ENCODE measurements at regions of chr1 and their contacts with region 1.

Region 1: GRCh38 chr1:94335950-94336349 is 82.2 kb upstream of the ABCD3 start:
- DNase-seq: no peak
- ATAC-seq: peak; percentile 86 to 93
- H3K4me3 ChIP-seq: no peak overlapping the region
- H3K27ac ChIP-seq: no peak overlapping the region
- H3K4me1 ChIP-seq: peaks cover 17% of the 10 kb centered on the region
- H3K27me3 ChIP-seq: no peaks in the 10 kb centered on the region
- CTCF ChIP-seq: peak; percentile 81

Region 2: DNA sequence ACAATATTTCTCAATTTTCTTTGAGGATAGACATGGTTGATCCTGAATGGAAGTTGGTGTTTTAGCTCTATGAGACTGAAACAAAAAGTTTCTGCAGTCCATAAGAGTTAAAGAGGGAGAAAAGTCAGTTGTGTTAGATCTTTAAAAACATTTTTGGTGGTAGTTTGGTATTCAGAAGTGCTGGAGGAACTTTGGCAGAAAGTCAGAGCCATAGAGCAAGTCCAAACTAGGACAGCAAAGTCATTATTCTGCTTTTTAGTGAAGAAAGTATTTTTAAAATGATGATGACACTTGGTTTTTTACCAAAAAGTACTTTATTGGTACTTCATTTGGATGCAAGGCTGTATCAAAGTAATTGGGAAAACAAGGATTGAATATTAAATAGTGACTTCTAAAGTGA is 846.2 kb before region 1 on chr1:
- intact Hi-C with region 1: no loop called
- DNase-seq: no peak
- ATAC-seq: no peak
- H3K4me3 ChIP-seq: no peak overlapping the region
- H3K27ac ChIP-seq: no peak overlapping the region
- H3K4me1 ChIP-seq: no peaks in the 10 kb centered on the region
- H3K27me3 ChIP-seq: no peaks in the 10 kb centered on the region
- CTCF ChIP-seq: no peak

Region 3: DNA sequence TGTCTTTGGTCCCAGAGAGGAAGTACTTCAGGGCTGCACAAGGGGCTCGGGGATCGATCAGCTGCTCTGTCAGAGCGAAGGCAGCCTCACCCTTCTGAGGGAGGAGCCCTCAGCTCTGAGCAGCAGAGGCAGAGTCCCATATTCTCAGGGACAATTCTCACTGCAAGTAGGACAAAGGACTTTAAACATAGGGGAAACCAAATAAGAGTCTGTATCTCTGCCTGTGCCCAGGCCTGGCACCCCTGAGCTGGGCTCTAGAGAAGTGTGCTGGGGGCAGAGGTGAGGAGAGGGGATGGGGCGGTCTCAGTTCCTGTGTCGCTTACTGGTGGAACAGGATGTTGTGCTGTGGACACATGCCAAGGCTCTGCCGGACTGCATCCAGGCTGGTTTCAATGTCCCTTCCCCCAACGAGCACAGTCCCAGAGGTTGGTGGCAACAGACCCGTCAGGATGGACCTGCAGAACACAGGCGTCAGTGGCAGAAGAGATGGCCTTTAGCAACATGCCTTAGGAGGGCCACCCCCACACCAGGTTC is 291.6 kb before region 1 on chr1:
- intact Hi-C with region 1: loop called (anchors 5 kb)
- DNase-seq: peak; percentile 76
- ATAC-seq: peak; percentile 47 to 61
- H3K4me3 ChIP-seq: no peak overlapping the region
- H3K27ac ChIP-seq: peak overlapping the region; percentile 82
- H3K4me1 ChIP-seq: peaks cover 58% of the 10 kb centered on the region
- H3K27me3 ChIP-seq: no peaks in the 10 kb centered on the region
- CTCF ChIP-seq: no peak

Region 4: GRCh38 chr1:94160811-94161210 is 175.1 kb before region 1 on chr1:
- intact Hi-C with region 1: no loop called
- DNase-seq: no peak
- ATAC-seq: no peak
- H3K4me3 ChIP-seq: no peak overlapping the region
- H3K27ac ChIP-seq: no peak overlapping the region
- H3K4me1 ChIP-seq: no peaks in the 10 kb centered on the region
- H3K27me3 ChIP-seq: no peaks in the 10 kb centered on the region
- CTCF ChIP-seq: no peak

Region 5: GRCh38 chr1:94247138-94248094 is 88.5 kb before region 1 on chr1:
- intact Hi-C with region 1: loop called (anchors 10 kb)
- DNase-seq: peak; percentile 89
- ATAC-seq: peak; percentile 97 to 98
- H3K4me3 ChIP-seq: peak overlapping the region; percentile 65
- H3K27ac ChIP-seq: peak overlapping the region; percentile 87
- H3K4me1 ChIP-seq: no peaks in the 10 kb centered on the region
- H3K27me3 ChIP-seq: no peaks in the 10 kb centered on the region
- CTCF ChIP-seq: no peak

Measured in lower lobe of right lung (tissue), 2 donors.